Activated naive CD4-positive, alpha-beta T cell treated with anti-CD3 and anti-CD28 coated beads, Interleukin-2, amount 10 ng/mL, durations not matched to agents 7 days and 5 days (primary cell): ENCODE measurements at regions of chr1 and their contacts with region 1.

Region 1: GRCh38 chr1:6359216-6360116 is 34.1 kb downstream of the ACOT7 start:
- DNase-seq: peak; percentile 82
- H3K4me3 Mint-ChIP-seq: peak overlapping the region; percentile 55
- H3K27ac Mint-ChIP-seq: peak overlapping the region; percentile 91
- H3K4me1 Mint-ChIP-seq: peaks cover 63% of the 10 kb centered on the region
- H3K27me3 Mint-ChIP-seq: no peaks in the 10 kb centered on the region

Region 2: GRCh38 chr1:5975133-5975880 is 384.2 kb before region 1 on chr1:
- CTCF ChIA-PET with region 1: no interaction called
- DNase-seq: peak; percentile 56
- H3K4me3 Mint-ChIP-seq: no peak overlapping the region
- H3K27ac Mint-ChIP-seq: peak overlapping the region; percentile 45
- H3K4me1 Mint-ChIP-seq: peaks cover 5% of the 10 kb centered on the region
- H3K27me3 Mint-ChIP-seq: no peaks in the 10 kb centered on the region

Region 3: GRCh38 chr1:6370006-6370405 is 10.5 kb after region 1 on chr1:
- CTCF ChIA-PET with region 1: no interaction called
- DNase-seq: no peak
- H3K4me3 Mint-ChIP-seq: no peak overlapping the region
- H3K27ac Mint-ChIP-seq: no peak overlapping the region
- H3K4me1 Mint-ChIP-seq: peaks cover 16% of the 10 kb centered on the region
- H3K27me3 Mint-ChIP-seq: no peaks in the 10 kb centered on the region

Region 4: GRCh38 chr1:6393400-6394187 is 34.1 kb after region 1 on chr1 and contains the start of gene ACOT7:
- CTCF ChIA-PET with region 1: interaction called, 37 read pairs
- DNase-seq: peak; percentile 93
- H3K4me3 Mint-ChIP-seq: peak within 1 kb of the TSS; percentile 90
- H3K27ac Mint-ChIP-seq: peak within 1 kb of the TSS; percentile 92
- H3K4me1 Mint-ChIP-seq: peaks cover 44% of the 10 kb centered on the region
- H3K27me3 Mint-ChIP-seq: peaks cover 5% of the 10 kb centered on the region

Region 5: DNA sequence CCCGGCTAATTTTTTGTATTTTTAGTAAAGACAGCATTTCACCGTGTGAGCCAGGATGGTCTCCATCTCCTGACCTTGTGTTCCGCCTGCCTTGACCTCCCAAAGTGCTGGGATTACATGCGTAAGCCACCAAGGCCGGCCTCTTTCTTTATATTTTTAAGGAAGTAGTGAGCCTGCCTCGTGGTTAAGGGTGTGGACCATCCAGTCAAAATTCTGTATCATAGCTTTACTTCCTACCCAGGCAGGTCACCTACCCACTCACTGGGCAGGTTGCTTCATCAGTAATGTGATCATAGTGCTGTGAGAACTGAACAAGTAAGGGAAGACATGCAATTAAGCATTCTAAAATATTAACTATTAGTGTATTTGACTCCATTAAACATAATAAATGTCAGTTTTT is 42.2 kb after region 1 on chr1:
- CTCF ChIA-PET with region 1: interaction called, 37 read pairs
- DNase-seq: no peak
- H3K4me3 Mint-ChIP-seq: no peak overlapping the region
- H3K27ac Mint-ChIP-seq: no peak overlapping the region
- H3K4me1 Mint-ChIP-seq: peaks cover 13% of the 10 kb centered on the region
- H3K27me3 Mint-ChIP-seq: peaks cover 50% of the 10 kb centered on the region

Region 6: GRCh38 chr1:6523566-6523965 is 164.1 kb after region 1 on chr1:
- CTCF ChIA-PET with region 1: no interaction called
- DNase-seq: no peak
- H3K4me3 Mint-ChIP-seq: no peak overlapping the region
- H3K27ac Mint-ChIP-seq: peak overlapping the region; percentile 39
- H3K4me1 Mint-ChIP-seq: no peaks in the 10 kb centered on the region
- H3K27me3 Mint-ChIP-seq: no peaks in the 10 kb centered on the region